Endothelial cell of umbilical vein (primary cell): ENCODE measurements at regions of chr5 and their contacts with region 1.

Region 1: GRCh38 chr5:932628-933250 is 40.1 kb downstream of the TRIP13 start:
- DNase-seq: no peak
- H3K4me3 ChIP-seq: no peak overlapping the region
- H3K27ac ChIP-seq: no peak overlapping the region
- H3K4me1 ChIP-seq: no peaks in the 10 kb centered on the region
- H3K27me3 ChIP-seq: no peaks in the 10 kb centered on the region
- CTCF ChIP-seq: no peak
- POLR2A ChIP-seq: no peak

Region 2: DNA sequence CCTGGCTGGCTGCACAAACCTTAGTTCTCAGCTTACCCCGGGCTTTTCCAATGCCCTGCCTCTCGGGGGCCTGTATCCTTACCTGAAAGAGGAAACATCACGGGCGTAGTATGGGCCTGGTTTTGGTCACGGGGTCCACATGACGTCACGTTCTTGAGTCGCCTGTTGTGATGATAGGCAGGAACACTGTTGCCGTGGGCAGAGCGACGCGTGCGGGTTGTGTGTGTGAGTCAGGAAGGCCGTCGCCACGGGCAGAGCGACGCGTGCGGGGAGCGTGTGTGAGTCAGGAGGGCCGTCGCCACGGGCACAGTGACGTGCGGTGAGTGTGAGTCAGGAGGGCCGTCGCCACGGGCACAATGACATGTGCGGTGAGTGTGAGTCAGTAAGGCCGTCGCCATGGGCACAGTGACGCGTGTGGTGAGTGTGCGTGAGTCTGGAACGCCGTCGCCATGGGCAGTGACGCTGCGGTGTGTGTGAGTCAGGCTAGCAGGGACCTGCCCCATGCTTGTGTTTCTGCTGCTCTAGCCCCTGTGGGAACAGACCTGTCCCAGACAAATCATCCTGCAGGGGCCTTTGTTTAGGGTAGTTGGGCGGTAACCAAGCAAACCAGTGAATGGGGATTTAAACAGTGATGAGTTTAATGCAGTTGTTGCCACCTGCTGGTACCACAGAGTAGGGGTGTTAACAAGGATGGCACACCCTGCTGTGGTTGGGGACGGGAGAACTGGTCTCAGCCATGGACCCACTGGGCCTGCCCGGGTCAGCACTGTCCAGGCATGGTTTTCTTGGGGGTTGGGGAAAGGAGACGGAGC is 20.3 kb before region 1 on chr5:
- CTCF ChIA-PET with region 1: no interaction called
- POLR2A ChIA-PET with region 1: no interaction called
- dilution Hi-C with region 1: no loop called
- intact Hi-C with region 1: no loop called
- DNase-seq: peak; percentile 51
- H3K4me3 ChIP-seq: no peak overlapping the region
- H3K27ac ChIP-seq: peak overlapping the region; percentile 82
- H3K4me1 ChIP-seq: peaks cover 4% of the 10 kb centered on the region
- H3K27me3 ChIP-seq: no peaks in the 10 kb centered on the region
- CTCF ChIP-seq: peak in 1 of 2 donors; percentile 7
- POLR2A ChIP-seq: no peak

Region 3: GRCh38 chr5:1140171-1140817 is 207.6 kb after region 1 on chr5:
- CTCF ChIA-PET with region 1: interaction called, 23 read pairs
- POLR2A ChIA-PET with region 1: no interaction called
- dilution Hi-C with region 1: no loop called
- intact Hi-C with region 1: no loop called
- DNase-seq: peak; percentile 42
- H3K4me3 ChIP-seq: no peak overlapping the region
- H3K27ac ChIP-seq: no peak overlapping the region
- H3K4me1 ChIP-seq: peaks cover 2% of the 10 kb centered on the region
- H3K27me3 ChIP-seq: no peaks in the 10 kb centered on the region
- CTCF ChIP-seq: peak; percentile 63 to 91
- POLR2A ChIP-seq: no peak

Region 4: GRCh38 chr5:1167728-1168709 is 235.3 kb after region 1 on chr5:
- CTCF ChIA-PET with region 1: interaction called, 10 read pairs
- POLR2A ChIA-PET with region 1: no interaction called
- dilution Hi-C with region 1: no loop called
- intact Hi-C with region 1: no loop called
- DNase-seq: peak; percentile 56
- H3K4me3 ChIP-seq: no peak overlapping the region
- H3K27ac ChIP-seq: no peak overlapping the region
- H3K4me1 ChIP-seq: no peaks in the 10 kb centered on the region
- H3K27me3 ChIP-seq: no peaks in the 10 kb centered on the region
- CTCF ChIP-seq: peak; percentile 61 to 78
- POLR2A ChIP-seq: no peak

Region 5: GRCh38 chr5:1174122-1174936 is 241.6 kb after region 1 on chr5:
- CTCF ChIA-PET with region 1: interaction called, 12 read pairs
- POLR2A ChIA-PET with region 1: no interaction called
- dilution Hi-C with region 1: no loop called
- intact Hi-C with region 1: no loop called
- DNase-seq: peak; percentile 63
- H3K4me3 ChIP-seq: no peak overlapping the region
- H3K27ac ChIP-seq: no peak overlapping the region
- H3K4me1 ChIP-seq: no peaks in the 10 kb centered on the region
- H3K27me3 ChIP-seq: no peaks in the 10 kb centered on the region
- CTCF ChIP-seq: peak; percentile 80 to 84
- POLR2A ChIP-seq: no peak